ENCODE measurements at regions of chr6 and their contacts with region 1.

Region 1: DNA sequence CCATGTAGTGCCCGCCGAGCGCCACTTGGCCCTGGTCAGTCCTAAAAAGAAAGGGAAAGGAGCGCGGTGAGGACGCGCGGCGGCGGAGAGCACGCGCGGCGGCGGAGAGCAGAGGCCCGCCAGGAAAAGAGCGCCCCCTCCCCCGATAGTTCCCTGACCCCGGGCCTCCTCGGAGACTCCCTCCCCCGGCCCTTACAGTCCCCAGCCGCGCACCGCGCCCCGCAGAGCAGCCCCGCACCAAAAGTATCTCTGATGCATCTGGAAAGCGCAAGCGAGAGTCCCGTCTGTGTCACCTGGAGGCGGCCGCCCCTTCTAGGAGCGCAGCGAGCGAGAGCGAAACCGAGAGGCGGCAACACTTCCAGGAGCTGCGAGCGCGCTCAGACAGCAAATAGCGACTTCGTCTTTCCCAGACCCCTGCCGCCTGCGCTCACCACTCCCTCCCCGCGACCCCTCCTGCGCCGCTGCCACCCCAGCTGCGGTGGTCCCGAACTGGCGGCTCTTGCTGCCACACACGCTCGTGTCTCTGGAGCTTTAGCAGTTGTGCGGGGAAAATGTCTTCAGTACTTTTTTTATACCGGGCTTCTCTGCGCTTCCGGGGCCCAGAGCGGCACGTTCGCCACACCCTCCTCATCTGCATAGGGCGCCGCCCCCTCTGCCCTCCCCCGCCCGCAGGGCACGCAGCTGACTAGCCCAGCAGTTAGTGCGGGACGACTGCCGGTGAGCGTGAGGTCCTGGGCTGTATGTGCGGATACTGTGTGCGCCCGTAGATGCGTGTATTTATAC is at the start of gene TENT5A:
- DNase-seq: peak; percentile 98
- H3K4me3 ChIP-seq: peak within 1 kb of the TSS; percentile 90 to 96 (median 94)
- H3K27ac ChIP-seq: peak within 1 kb of the TSS; percentile 94 to 98 (median 98)
- H3K4me1 ChIP-seq: peaks cover 4 to 47% (median 42%) of the 10 kb centered on the region in 4 donors
- H3K27me3 ChIP-seq: no peaks in the 10 kb centered on the region
- CTCF ChIP-seq: no peak
- EP300 ChIP-seq: no peak
- POLR2A ChIP-seq: peak; percentile 57
- total RNA-seq, gene TENT5A: 8.5 to 10.4 (median 9.6) TPM

Region 2: GRCh38 chr6:79949233-79949632 is 1803.1 kb before region 1 on chr6:
- intact Hi-C with region 1: loop called (anchors 10 kb)
- DNase-seq: no peak
- H3K4me3 ChIP-seq: no peak overlapping the region
- H3K27ac ChIP-seq: no peak overlapping the region
- H3K4me1 ChIP-seq: peaks cover 16 to 29% (median 23%) of the 10 kb centered on the region in 4 donors
- H3K27me3 ChIP-seq: peaks cover 0 to 4% (median 0%) of the 10 kb centered on the region in 4 donors
- CTCF ChIP-seq: peak in 2 of 3 experiments; percentile 35 to 59
- EP300 ChIP-seq: no peak
- POLR2A ChIP-seq: no peak

Region 3: GRCh38 chr6:80106418-80107235 is 1645.7 kb before region 1 on chr6 and contains the start of gene BCKDHB:
- intact Hi-C with region 1: loop called (anchors 10 kb)
- DNase-seq: peak; percentile 99
- H3K4me3 ChIP-seq: peak within 1 kb of the TSS; percentile 71 to 89 (median 84)
- H3K27ac ChIP-seq: peak within 1 kb of the TSS; percentile 89 to 97 (median 94)
- H3K4me1 ChIP-seq: peaks cover 6 to 17% (median 13%) of the 10 kb centered on the region in 4 donors
- H3K27me3 ChIP-seq: no peaks in the 10 kb centered on the region
- CTCF ChIP-seq: peak in 1 of 3 experiments; percentile 20
- EP300 ChIP-seq: no peak
- POLR2A ChIP-seq: peak; percentile 61
- total RNA-seq, gene BCKDHB: 12.2 to 26.2 (median 20.6) TPM

Region 4: DNA sequence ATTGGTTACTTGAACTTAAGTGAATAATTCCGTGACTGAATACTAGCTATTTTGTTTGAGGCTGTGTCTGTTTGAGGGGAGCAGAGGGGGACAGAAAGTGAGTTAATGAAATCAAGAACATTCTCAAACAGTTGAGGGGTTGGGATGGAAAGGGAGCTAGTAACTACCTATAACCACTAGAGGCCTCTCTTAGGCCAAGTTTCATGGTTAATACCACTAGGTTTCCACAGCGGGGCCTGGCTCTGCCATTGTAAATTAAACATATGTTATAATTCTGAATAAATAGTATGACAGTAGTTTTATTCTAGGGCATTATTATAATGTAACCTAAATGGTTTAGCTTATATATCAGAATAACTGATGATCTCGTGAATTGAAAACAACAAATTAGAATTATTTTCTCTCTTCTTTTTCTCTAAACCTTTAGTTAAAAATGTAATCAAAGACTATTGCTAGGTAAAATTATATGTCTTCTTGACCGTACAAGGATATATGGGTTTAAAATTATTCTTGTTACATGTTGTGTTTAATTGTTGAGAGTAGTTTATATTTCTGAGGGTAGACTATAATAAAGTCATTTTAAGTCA is 1537.8 kb before region 1 on chr6:
- intact Hi-C with region 1: loop called (anchors 5 kb)
- DNase-seq: no peak
- H3K4me3 ChIP-seq: no peak overlapping the region
- H3K27ac ChIP-seq: no peak overlapping the region
- H3K4me1 ChIP-seq: peaks cover 0 to 27% (median 17%) of the 10 kb centered on the region in 4 donors
- H3K27me3 ChIP-seq: no peaks in the 10 kb centered on the region
- CTCF ChIP-seq: peak; percentile 62 to 74 (median 62)
- EP300 ChIP-seq: no peak
- POLR2A ChIP-seq: no peak

Region 5: GRCh38 chr6:80605165-80605989 is 1147.0 kb before region 1 on chr6:
- intact Hi-C with region 1: loop called (anchors 5 kb)
- DNase-seq: no peak
- H3K4me3 ChIP-seq: no peak overlapping the region
- H3K27ac ChIP-seq: no peak overlapping the region
- H3K4me1 ChIP-seq: peaks cover 7 to 21% (median 18%) of the 10 kb centered on the region in 4 donors
- H3K27me3 ChIP-seq: no peaks in the 10 kb centered on the region
- CTCF ChIP-seq: peak; percentile 50 to 62 (median 51)
- EP300 ChIP-seq: no peak
- POLR2A ChIP-seq: no peak

Region 6: GRCh38 chr6:82033631-82034211 is 281.4 kb after region 1 on chr6:
- intact Hi-C with region 1: loop called (anchors 10 kb)
- DNase-seq: no peak
- H3K4me3 ChIP-seq: no peak overlapping the region
- H3K27ac ChIP-seq: no peak overlapping the region
- H3K4me1 ChIP-seq: peaks cover 0 to 4% (median 0%) of the 10 kb centered on the region in 4 donors
- H3K27me3 ChIP-seq: no peaks in the 10 kb centered on the region
- CTCF ChIP-seq: no peak
- EP300 ChIP-seq: no peak
- POLR2A ChIP-seq: no peak

Region 7: GRCh38 chr6:82045965-82046756 is 293.8 kb after region 1 on chr6:
- intact Hi-C with region 1: no loop called
- DNase-seq: no peak
- H3K4me3 ChIP-seq: no peak overlapping the region
- H3K27ac ChIP-seq: no peak overlapping the region
- H3K4me1 ChIP-seq: no peaks in the 10 kb centered on the region
- H3K27me3 ChIP-seq: no peaks in the 10 kb centered on the region
- CTCF ChIP-seq: no peak
- EP300 ChIP-seq: no peak
- POLR2A ChIP-seq: no peak

Measured in esophagus muscularis mucosa (tissue), 4 donors.